ENCODE measurements at regions of chr9 and their contacts with region 1.

Region 1: GRCh38 chr9:101951598-101951997 is 213.2 kb upstream of the GRIN3A start:
- DNase-seq: no peak
- ATAC-seq: no peak
- H3K4me3 ChIP-seq: no peak overlapping the region
- H3K27ac ChIP-seq: no peak overlapping the region
- H3K4me1 ChIP-seq: no peaks in the 10 kb centered on the region
- H3K27me3 ChIP-seq: no peaks in the 10 kb centered on the region
- CTCF ChIP-seq: no peak

Region 2: DNA sequence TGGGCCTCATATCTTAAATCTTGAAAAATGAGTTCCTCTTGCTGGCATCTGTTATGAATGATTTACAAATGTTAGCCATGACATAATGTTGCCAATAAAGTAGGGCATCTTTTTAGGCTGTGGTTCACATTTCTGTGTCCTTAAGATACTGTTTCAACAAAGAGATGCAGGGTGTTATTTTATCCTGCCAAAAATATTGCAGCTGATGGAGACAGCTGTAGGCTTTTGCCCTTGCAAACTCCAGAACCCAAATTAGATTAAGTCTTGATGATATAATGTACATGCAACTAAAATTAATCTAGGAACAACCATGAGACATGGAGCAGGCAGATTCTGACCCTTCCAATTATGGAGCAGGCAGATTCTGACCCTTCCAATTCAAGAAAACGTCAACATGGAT is 15.1 kb after region 1 on chr9:
- intact Hi-C with region 1: loop called in 1 of 2 experiments (anchors 1 kb)
- DNase-seq: no peak
- ATAC-seq: no peak
- H3K4me3 ChIP-seq: no peak overlapping the region
- H3K27ac ChIP-seq: no peak overlapping the region
- H3K4me1 ChIP-seq: no peaks in the 10 kb centered on the region
- H3K27me3 ChIP-seq: no peaks in the 10 kb centered on the region
- CTCF ChIP-seq: no peak

Region 3: GRCh38 chr9:102000956-102001355 is 49.4 kb after region 1 on chr9:
- intact Hi-C with region 1: loop called in 1 of 2 experiments (anchors 5 kb)
- DNase-seq: no peak
- ATAC-seq: no peak
- H3K4me3 ChIP-seq: no peak overlapping the region
- H3K27ac ChIP-seq: no peak overlapping the region
- H3K4me1 ChIP-seq: no peaks in the 10 kb centered on the region
- H3K27me3 ChIP-seq: no peaks in the 10 kb centered on the region
- CTCF ChIP-seq: no peak

Measured in psoas muscle (tissue), 8 donors.